Endothelial cell of umbilical vein (primary cell): ENCODE measurements at regions of chr15 and their contacts with region 1.

Region 1: GRCh38 chr15:59917504-59918157 is 86.5 kb upstream of the FOXB1 start:
- DNase-seq: peak; percentile 44
- H3K4me3 ChIP-seq: no peak overlapping the region
- H3K27ac ChIP-seq: no peak overlapping the region
- H3K4me1 ChIP-seq: no peaks in the 10 kb centered on the region
- H3K27me3 ChIP-seq: peaks cover 4 to 7% of the 10 kb centered on the region in 2 experiments
- CTCF ChIP-seq: peak; percentile 44 to 57
- POLR2A ChIP-seq: no peak

Region 2: GRCh38 chr15:58889363-58889762 is 1028.3 kb before region 1 on chr15:
- CTCF ChIA-PET with region 1: no interaction called
- POLR2A ChIA-PET with region 1: no interaction called
- dilution Hi-C with region 1: no loop called
- intact Hi-C with region 1: no loop called
- DNase-seq: no peak
- H3K4me3 ChIP-seq: no peak overlapping the region
- H3K27ac ChIP-seq: no peak overlapping the region
- H3K4me1 ChIP-seq: no peaks in the 10 kb centered on the region
- H3K27me3 ChIP-seq: no peaks in the 10 kb centered on the region
- CTCF ChIP-seq: no peak
- POLR2A ChIP-seq: no peak

Region 3: DNA sequence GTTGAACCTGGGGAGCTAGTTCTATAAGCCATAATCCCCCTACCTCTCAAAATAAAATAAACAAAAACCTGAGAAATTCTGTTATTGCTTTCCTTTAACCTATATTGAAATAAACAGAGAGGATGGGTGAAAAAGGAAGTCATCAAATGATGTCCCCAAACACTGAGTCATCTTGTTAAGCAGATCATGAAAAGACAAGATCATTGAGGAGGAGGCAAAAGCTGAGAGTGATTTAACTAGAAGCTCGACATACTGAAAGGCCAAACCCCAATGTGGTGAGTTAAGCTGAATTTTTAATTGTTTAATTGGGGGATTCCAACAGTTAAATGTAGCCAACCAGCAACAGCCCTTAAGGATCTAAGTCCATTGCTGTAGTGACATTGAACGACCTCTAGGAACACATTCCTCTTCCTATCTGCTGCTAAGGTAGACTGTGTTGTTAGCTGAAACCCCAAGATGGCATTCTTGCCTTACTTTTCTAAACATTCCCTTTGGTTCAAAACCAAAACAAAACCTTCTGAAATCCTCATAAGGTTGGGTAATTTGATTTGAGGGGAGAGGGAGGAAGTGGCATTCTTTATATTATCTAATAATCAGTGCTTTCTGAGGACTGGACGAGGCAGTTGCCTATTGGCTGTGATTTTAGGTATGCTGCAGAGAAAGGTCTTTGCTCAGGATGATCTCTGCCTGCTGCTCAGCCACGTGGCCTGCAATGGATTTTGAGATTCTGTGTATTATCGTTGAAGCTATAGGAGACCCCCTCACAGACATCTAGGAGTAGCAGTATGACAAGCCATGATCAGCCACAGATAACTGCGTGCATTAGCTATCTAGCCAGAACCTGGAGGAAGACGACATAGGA is 165.8 kb before region 1 on chr15:
- CTCF ChIA-PET with region 1: no interaction called
- POLR2A ChIA-PET with region 1: no interaction called
- dilution Hi-C with region 1: no loop called
- intact Hi-C with region 1: no loop called
- DNase-seq: no peak
- H3K4me3 ChIP-seq: no peak overlapping the region
- H3K27ac ChIP-seq: no peak overlapping the region
- H3K4me1 ChIP-seq: no peaks in the 10 kb centered on the region
- H3K27me3 ChIP-seq: peaks cover 0 to 8% of the 10 kb centered on the region in 2 experiments
- CTCF ChIP-seq: no peak
- POLR2A ChIP-seq: no peak

Region 4: DNA sequence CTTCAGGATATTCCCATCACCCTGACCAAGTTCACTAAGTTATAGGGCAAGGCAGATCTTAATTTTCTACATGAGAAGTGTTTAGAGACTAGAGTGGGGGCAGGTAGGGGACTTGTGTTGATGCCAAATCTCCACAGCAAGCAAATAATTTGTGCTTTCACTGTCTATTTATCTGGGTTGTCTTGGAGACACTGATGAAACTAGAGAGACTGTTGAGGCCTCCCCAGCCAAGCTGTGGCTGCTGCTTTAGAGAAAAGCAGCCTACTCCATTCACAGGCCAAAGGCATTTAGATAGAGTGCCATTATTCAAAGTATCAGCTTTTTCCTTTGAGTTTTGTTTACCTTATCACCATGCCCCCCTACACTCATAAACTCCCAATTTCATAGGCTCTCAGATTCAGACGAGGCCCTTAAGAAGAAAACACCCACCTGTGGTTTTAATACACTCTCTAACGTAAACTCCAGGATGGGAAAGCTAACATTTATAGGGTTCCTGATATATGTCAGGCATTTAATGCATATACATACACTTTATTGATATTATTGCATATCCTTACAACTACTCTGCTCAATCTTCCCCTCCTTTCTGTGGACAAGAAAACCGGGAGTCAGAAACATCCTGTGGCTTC is 43.9 kb before region 1 on chr15:
- CTCF ChIA-PET with region 1: no interaction called
- POLR2A ChIA-PET with region 1: no interaction called
- dilution Hi-C with region 1: no loop called
- intact Hi-C with region 1: no loop called
- DNase-seq: no peak
- H3K4me3 ChIP-seq: no peak overlapping the region
- H3K27ac ChIP-seq: no peak overlapping the region
- H3K4me1 ChIP-seq: no peaks in the 10 kb centered on the region
- H3K27me3 ChIP-seq: no peaks in the 10 kb centered on the region
- CTCF ChIP-seq: no peak
- POLR2A ChIP-seq: no peak

Region 5: DNA sequence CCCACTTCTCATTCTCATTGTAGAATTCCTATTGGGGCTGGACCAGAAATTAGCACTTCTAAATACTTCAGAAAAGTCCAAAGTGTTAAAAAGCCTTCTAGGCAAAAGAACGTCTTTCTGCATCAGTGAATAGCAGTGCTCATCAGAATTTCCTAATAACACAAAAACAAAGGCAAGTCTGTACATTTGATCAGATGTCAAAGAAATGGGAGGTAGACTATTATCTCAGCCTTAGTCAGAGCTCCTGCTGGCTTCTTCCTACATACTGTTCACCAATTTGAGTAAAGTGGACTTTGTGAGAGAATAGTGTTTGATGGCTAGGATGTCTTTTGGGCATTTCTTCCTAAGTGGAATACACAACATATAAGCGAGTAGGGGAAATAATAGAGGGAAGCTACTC is 135.2 kb after region 1 on chr15:
- CTCF ChIA-PET with region 1: no interaction called
- POLR2A ChIA-PET with region 1: no interaction called
- dilution Hi-C with region 1: no loop called
- intact Hi-C with region 1: no loop called
- DNase-seq: no peak
- H3K4me3 ChIP-seq: no peak overlapping the region
- H3K27ac ChIP-seq: no peak overlapping the region
- H3K4me1 ChIP-seq: no peaks in the 10 kb centered on the region
- H3K27me3 ChIP-seq: peaks cover 0 to 5% of the 10 kb centered on the region in 2 experiments
- CTCF ChIP-seq: no peak
- POLR2A ChIP-seq: no peak

Region 6: GRCh38 chr15:60179786-60180391 is 262.3 kb after region 1 on chr15:
- CTCF ChIA-PET with region 1: interaction called, 86 read pairs
- POLR2A ChIA-PET with region 1: no interaction called
- dilution Hi-C with region 1: no loop called
- intact Hi-C with region 1: loop called (anchors 1 kb)
- DNase-seq: peak; percentile 44
- H3K4me3 ChIP-seq: no peak overlapping the region
- H3K27ac ChIP-seq: no peak overlapping the region
- H3K4me1 ChIP-seq: no peaks in the 10 kb centered on the region
- H3K27me3 ChIP-seq: peaks cover 2 to 10% of the 10 kb centered on the region in 2 experiments
- CTCF ChIP-seq: peak; percentile 70 to 73
- POLR2A ChIP-seq: no peak

Region 7: GRCh38 chr15:60228619-60229018 is 311.0 kb after region 1 on chr15:
- CTCF ChIA-PET with region 1: no interaction called
- POLR2A ChIA-PET with region 1: interaction called, 10 read pairs
- dilution Hi-C with region 1: no loop called
- intact Hi-C with region 1: no loop called
- DNase-seq: no peak
- H3K4me3 ChIP-seq: no peak overlapping the region
- H3K27ac ChIP-seq: no peak overlapping the region
- H3K4me1 ChIP-seq: no peaks in the 10 kb centered on the region
- H3K27me3 ChIP-seq: peaks cover 0 to 6% of the 10 kb centered on the region in 2 experiments
- CTCF ChIP-seq: no peak
- POLR2A ChIP-seq: no peak